IMR-90 (cell line): ENCODE measurements at regions of chr10 and their contacts with region 1.

Region 1: DNA sequence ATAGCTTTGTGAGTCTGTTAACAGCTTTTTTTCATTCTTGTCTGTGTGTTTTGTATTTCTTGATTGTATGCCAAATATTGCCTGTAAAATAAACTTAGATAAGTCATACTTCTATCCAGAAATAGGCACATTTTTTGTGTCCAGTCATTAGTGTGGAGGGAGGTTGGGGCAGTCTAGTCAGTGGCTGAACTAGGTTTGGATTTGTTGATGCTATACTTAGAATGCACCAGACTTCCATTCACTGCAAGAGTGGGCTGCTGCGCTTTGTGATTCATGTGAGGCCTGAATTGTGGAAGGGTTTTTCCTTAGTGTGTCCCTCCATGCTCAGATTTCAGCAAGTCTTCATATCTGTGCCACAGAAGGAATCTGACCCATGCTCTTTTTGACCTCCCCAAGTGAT is 50.0 kb downstream of the TRUB1 start:
- DNase-seq: peak; percentile 92
- ATAC-seq: peak; percentile 90
- H3K4me3 ChIP-seq: no peak overlapping the region
- H3K27ac ChIP-seq: no peak overlapping the region
- H3K4me1 ChIP-seq: peaks cover 5% of the 10 kb centered on the region; the same call in 1 of the 2 replicates
- H3K27me3 ChIP-seq: no peaks in the 10 kb centered on the region
- CTCF ChIP-seq: no peak
- POLR2A ChIP-seq: no peak
- RAD21 ChIP-seq: no peak

Region 2: GRCh38 chr10:114962441-114962840 is 25.6 kb before region 1 on chr10:
- CTCF ChIA-PET with region 1: no interaction called
- POLR2A ChIA-PET with region 1: no interaction called
- dilution Hi-C with region 1: no loop called
- in situ Hi-C with region 1: no loop called
- intact Hi-C with region 1: loop called (anchors 1 kb)
- DNase-seq: no peak
- ATAC-seq: no peak
- H3K4me3 ChIP-seq: no peak overlapping the region
- H3K27ac ChIP-seq: no peak overlapping the region
- H3K4me1 ChIP-seq: peaks cover 1% of the 10 kb centered on the region
- H3K27me3 ChIP-seq: no peaks in the 10 kb centered on the region
- CTCF ChIP-seq: no peak
- POLR2A ChIP-seq: no peak
- RAD21 ChIP-seq: no peak

Region 3: GRCh38 chr10:115300080-115300479 is 312.1 kb after region 1 on chr10:
- CTCF ChIA-PET with region 1: no interaction called
- POLR2A ChIA-PET with region 1: no interaction called
- dilution Hi-C with region 1: no loop called
- in situ Hi-C with region 1: no loop called
- intact Hi-C with region 1: no loop called
- DNase-seq: no peak
- ATAC-seq: no peak
- H3K4me3 ChIP-seq: no peak overlapping the region
- H3K27ac ChIP-seq: no peak overlapping the region
- H3K4me1 ChIP-seq: no peaks in the 10 kb centered on the region
- H3K27me3 ChIP-seq: no peaks in the 10 kb centered on the region
- CTCF ChIP-seq: no peak
- POLR2A ChIP-seq: no peak
- RAD21 ChIP-seq: no peak